ENCODE measurements at regions of chr2 and their contacts with region 1.

Region 1: GRCh38 chr2:112941753-112942658 is 31.0 kb downstream of the IL37 start:
- DNase-seq: peak; percentile 85
- ATAC-seq: peak; percentile 96
- H3K4me3 Mint-ChIP-seq: no peak overlapping the region
- H3K27ac Mint-ChIP-seq: no peak overlapping the region
- H3K4me1 Mint-ChIP-seq: peaks cover 6% of the 10 kb centered on the region
- H3K27me3 Mint-ChIP-seq: peaks cover 10% of the 10 kb centered on the region

Region 2: GRCh38 chr2:112626604-112627059 is 315.4 kb before region 1 on chr2:
- CTCF ChIA-PET with region 1: interaction called, 11 read pairs
- POLR2A ChIA-PET with region 1: no interaction called
- DNase-seq: peak; percentile 79
- ATAC-seq: peak; percentile 50
- H3K4me3 Mint-ChIP-seq: peak overlapping the region; percentile 30
- H3K27ac Mint-ChIP-seq: peak overlapping the region; percentile 85
- H3K4me1 Mint-ChIP-seq: peaks cover 78% of the 10 kb centered on the region
- H3K27me3 Mint-ChIP-seq: peaks cover 4% of the 10 kb centered on the region

Region 3: DNA sequence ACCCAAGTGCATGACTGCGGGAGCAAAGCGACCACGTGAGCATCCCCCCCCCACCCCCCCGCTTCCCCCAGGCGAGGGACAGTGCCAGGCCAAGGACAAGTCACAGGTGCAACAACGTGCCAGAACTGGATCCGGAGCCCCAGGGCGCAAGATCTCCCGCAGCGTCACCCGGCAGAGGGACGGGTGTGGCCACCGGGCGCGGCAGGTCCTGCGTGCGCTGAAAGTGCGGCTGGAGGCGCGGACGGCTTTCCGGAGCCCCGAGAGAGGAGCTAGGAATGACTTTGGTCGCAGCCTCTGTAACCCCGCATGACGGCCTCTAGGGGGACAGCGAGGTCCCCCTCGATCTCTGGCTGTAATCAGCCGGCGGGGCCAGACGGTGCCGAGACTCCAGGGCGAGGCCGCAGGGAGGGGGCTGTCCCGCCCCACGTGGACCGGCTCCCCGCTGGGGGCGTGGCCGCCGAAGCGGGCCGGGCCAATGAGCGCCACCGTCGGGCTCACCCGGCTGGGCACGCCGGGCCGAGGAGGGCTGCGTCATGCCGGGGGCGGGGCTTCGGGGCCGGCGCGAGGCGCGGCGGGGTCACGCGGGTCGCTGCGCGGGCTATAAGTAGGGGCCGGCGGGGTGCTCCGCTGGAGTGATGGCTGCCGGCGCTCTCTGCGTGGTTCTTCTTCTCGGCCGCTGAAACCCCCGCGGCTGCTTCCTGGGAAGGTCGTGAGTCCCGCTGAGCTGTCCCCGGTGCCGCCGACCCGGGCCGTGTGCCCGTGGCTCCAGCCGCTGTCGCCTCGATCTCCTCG is 296.5 kb before region 1 on chr2 and contains the start of gene SLC20A1:
- CTCF ChIA-PET with region 1: no interaction called
- POLR2A ChIA-PET with region 1: no interaction called
- DNase-seq: peak; percentile 97
- ATAC-seq: peak; percentile 94
- H3K4me3 Mint-ChIP-seq: peak within 1 kb of the TSS; percentile 92
- H3K27ac Mint-ChIP-seq: peak within 1 kb of the TSS; percentile 90
- H3K4me1 Mint-ChIP-seq: peaks cover 65% of the 10 kb centered on the region
- H3K27me3 Mint-ChIP-seq: peaks cover 3% of the 10 kb centered on the region
- total RNA-seq, gene SLC20A1: 115 to 120 TPM

Region 4: DNA sequence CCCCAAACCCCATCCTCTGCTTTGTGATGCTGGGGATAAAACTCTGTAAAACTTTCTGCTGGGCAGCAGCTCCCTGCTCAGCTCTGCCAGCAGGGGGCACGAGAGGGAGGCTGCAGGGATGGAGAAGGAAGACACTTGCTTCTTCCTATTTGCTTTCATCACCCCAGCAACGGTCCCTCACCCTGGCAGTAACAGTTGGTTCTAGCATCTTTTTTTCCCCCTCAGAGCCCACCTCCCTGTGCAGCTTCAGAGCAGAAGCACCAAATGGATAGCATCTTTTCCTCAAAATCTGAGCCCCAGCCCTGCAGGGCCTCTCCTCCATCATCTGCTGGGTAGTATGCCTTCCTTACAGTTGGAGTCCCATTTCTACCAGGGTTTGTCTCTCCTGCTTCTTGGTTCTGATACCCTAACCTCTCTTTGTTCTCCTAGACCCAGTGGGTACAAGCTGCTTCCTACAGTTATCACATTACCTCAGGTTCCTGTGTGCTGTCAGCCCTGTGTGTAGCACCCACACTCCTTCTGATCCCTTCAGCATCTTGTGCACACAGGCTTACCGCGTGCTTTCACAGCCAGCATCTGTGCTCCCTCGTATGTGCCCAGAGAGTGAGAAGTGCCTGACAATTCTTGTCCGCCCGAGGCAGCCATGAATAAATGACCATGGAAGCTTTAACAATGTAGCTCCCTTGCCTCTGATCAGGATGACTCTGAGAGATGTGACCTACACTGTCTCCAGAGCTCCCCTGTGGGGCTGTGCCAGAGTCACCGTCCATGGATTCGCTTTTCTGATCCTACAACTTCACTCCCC is 192.0 kb before region 1 on chr2:
- CTCF ChIA-PET with region 1: interaction called, 242 read pairs
- POLR2A ChIA-PET with region 1: interaction called, 5 read pairs
- DNase-seq: peak; percentile 87
- ATAC-seq: peak; percentile 93
- H3K4me3 Mint-ChIP-seq: no peak overlapping the region
- H3K27ac Mint-ChIP-seq: peak overlapping the region; percentile 28
- H3K4me1 Mint-ChIP-seq: peaks cover 37% of the 10 kb centered on the region
- H3K27me3 Mint-ChIP-seq: no peaks in the 10 kb centered on the region

Region 5: DNA sequence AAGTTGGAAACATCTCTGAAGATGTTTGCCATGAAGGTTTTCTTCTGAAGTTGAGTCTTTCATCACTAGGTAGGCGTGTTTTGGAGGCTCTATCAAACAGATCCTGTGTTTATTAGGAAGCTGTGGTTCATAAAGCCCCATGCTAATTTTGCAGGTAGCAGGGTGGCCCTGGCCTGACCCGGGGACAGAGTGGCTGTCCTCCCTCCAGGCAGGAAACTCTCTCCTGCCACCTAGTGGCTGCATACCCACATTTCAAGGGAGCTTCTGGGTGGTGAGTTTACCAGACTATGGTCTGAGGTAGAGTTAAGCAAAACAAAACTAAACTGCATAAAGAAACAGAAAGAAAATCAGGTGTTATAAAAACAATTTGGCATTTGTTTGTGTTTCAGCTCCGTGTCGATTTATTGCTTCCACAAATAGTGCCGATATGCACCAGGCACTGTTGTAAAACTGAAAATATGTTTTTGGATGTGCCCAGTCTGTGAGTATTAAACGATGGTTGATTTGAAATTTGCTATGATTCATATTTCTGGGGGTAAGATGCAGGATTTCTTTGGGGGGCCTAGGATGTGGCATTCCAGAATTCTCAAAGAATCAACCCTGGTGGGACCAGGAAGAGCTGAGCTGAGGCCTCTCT is 57.0 kb before region 1 on chr2:
- CTCF ChIA-PET with region 1: interaction called, 63 read pairs
- POLR2A ChIA-PET with region 1: no interaction called
- DNase-seq: peak; percentile 74
- ATAC-seq: peak; percentile 77
- H3K4me3 Mint-ChIP-seq: no peak overlapping the region
- H3K27ac Mint-ChIP-seq: no peak overlapping the region
- H3K4me1 Mint-ChIP-seq: peaks cover 27% of the 10 kb centered on the region
- H3K27me3 Mint-ChIP-seq: peaks cover 9% of the 10 kb centered on the region

Region 6: DNA sequence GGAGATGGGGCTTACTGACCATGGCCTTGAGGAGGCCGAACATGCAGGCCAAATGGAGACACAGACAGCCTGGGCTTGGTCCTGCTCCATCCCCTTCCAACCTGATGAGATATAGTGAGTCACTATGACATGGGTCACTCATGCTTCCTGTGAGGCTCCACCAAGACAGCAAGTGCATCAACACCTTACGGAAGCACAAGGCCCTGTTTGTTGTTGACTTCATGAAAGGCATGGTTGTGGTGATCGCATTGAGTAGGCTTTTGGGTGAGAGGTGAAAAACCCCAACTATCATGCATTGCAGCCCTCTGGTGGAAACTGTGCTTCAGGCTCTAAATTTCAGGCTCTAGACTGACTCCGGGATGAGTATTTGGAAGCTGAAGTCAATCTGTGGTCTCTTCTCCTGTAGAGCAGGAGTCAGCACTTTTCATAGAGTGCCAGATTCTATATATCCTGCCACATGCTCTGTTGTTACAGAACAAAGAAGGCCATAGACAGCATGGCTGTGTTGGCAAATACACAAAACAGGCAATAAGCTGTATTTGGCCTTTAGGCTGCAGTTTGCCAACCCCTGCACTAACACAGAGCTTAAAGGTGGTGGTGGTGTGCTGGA is 21.0 kb before region 1 on chr2:
- CTCF ChIA-PET with region 1: interaction called, 64 read pairs
- POLR2A ChIA-PET with region 1: no interaction called
- DNase-seq: peak; percentile 24
- ATAC-seq: peak; percentile 49
- H3K4me3 Mint-ChIP-seq: no peak overlapping the region
- H3K27ac Mint-ChIP-seq: peak overlapping the region; percentile 41
- H3K4me1 Mint-ChIP-seq: peaks cover 8% of the 10 kb centered on the region
- H3K27me3 Mint-ChIP-seq: peaks cover 2% of the 10 kb centered on the region

Region 7: DNA sequence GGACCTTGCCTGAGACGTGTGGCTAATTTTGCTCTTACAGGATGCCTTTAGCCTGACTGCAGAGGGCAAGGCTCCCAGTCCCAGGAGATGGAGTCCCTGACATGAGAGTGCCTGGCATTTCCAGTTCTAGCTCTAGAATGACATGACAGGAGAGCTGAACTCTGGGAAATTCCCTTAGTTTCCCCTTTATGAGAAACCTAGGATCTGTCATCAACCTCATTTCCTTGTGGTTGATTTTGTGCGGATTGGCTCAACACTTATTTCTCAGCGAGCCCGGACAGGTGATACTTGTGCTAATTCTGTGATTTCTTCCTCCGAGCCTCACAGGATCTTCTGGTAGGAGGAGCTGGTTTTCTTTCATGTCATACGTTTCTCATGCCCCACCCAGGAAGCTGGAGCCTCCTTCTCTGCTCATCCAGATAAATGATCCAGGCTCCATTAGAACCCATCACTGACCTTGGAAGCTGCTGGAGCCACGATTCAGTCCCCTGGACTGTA is 35.6 kb after region 1 on chr2 and contains the start of gene IL36G:
- CTCF ChIA-PET with region 1: interaction called, 11 read pairs
- POLR2A ChIA-PET with region 1: no interaction called
- DNase-seq: no peak
- ATAC-seq: no peak
- H3K4me3 Mint-ChIP-seq: no peak within 1 kb of the TSS
- H3K27ac Mint-ChIP-seq: no peak within 1 kb of the TSS
- H3K4me1 Mint-ChIP-seq: no peaks in the 10 kb centered on the region
- H3K27me3 Mint-ChIP-seq: no peaks in the 10 kb centered on the region
- total RNA-seq, gene IL36G: not detected